Mammary epithelial cell (primary cell): ENCODE measurements at regions of chr11 and their contacts with region 1.

Region 1: DNA sequence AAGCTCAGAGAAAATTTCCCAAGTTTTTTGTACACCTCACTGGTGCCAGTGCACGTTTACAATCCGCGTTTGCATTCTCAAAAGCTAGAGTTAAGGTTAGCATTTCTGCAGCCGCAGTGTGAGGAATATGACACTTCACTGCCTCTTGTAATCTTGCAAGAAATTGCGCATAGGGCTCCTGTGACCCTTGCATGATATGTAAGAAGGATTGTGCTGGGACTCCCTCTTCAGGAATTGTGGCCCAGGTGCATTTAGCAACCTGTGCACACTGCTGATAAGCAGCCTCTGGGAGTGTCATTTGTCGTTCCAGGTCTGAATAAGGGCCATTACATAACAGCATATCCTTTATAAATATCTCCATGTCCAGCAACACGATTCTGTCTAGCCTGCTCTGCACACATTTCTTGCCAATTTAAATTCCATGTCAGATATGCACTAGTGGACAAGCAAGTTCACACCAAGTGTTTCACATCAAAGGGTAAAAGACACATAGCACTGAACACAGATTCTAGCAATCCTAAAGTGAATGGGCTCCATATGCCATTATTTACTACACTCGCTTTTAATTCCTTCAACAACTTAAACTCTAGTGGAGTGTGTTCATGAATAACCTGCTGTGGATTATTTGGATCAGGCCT is 69.2 kb upstream of the INCENP start:
- DNase-seq: peak; percentile 42
- H3K4me3 ChIP-seq: no peak overlapping the region
- H3K27ac ChIP-seq: no peak overlapping the region
- H3K4me1 ChIP-seq: peaks cover 8% of the 10 kb centered on the region
- H3K27me3 ChIP-seq: no peaks in the 10 kb centered on the region
- CTCF ChIP-seq: peak; percentile 74 to 87

Region 2: DNA sequence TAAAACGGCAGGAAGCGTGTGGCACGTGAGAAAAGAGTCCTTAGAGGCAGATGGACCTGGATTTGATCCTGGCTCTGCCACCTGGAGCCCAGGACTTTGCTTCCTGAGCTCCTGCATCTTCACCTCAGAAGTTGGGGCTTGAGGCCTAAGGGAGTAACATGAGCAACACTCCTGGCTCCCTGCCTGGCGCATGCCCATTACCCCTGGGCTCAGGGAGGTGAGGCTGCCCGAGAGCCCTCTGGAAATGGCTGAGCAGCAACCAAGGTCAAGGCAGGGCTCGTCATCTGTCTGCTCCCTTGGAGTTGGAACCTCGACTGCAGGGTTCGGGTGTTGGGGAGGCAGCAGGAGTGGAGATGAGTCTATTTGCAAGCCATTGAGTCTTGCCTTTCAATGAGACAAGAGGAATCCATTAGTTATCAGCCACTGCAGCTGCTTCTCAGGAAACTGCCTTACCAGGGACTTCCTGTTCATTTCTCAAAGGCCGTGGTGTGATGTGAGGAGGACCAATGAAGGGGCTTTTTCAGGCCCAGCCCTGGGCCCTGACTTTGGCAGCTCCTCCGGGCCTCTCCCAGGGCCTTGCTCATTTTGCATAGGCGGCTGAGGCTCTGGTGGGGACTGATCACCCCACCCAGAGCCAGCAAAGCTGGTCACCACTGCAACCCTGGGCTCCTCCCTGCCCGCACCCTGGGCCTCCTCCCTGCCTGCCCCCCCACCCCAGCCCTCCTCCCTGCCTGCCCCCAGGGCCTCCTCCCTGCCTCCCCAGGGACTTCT is 220.1 kb before region 1 on chr11:
- CTCF ChIA-PET with region 1: no interaction called
- dilution Hi-C with region 1: no loop called
- in situ Hi-C with region 1: no loop called
- intact Hi-C with region 1: no loop called
- DNase-seq: no peak
- H3K4me3 ChIP-seq: no peak overlapping the region
- H3K27ac ChIP-seq: no peak overlapping the region
- H3K4me1 ChIP-seq: peaks cover 5% of the 10 kb centered on the region
- H3K27me3 ChIP-seq: no peaks in the 10 kb centered on the region
- CTCF ChIP-seq: no peak

Region 3: GRCh38 chr11:61947486-61948210 is 107.0 kb before region 1 on chr11:
- CTCF ChIA-PET with region 1: no interaction called
- dilution Hi-C with region 1: no loop called
- in situ Hi-C with region 1: no loop called
- intact Hi-C with region 1: loop called (anchors 1 kb)
- DNase-seq: peak; percentile 59
- H3K4me3 ChIP-seq: no peak overlapping the region
- H3K27ac ChIP-seq: no peak overlapping the region
- H3K4me1 ChIP-seq: no peaks in the 10 kb centered on the region
- H3K27me3 ChIP-seq: no peaks in the 10 kb centered on the region
- CTCF ChIP-seq: peak; percentile 97 to 98

Region 4: DNA sequence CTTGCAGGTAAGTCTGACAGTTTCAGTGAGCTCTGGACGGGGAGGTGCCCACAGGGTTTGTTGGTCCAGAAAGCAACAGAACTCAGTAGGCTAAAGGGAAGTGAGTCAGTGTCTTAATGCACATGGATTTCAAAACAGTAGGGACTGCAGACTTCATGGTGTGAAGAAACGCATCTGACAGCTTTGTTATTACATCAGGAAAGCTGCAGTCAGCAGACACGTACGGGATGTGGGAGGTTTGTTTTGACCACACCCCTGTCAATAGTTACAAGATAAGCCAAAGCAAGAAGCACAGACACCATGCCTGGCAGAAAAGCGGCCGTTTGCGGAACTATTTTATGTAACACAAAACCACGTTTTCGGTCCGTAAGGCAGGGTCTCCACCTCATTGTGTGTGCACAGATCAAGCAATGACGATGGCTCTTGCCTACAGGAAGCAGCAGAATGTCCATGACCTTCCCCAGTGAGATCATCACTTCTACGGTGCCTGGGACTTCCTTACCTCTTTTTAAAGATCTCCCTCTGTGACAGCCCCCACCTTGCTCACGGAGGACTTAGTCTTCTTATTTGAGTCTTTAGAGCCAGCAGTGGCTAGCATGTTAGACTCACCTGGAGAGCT is 29.0 kb before region 1 on chr11:
- CTCF ChIA-PET with region 1: no interaction called
- dilution Hi-C with region 1: no loop called
- in situ Hi-C with region 1: no loop called
- intact Hi-C with region 1: no loop called
- DNase-seq: peak; percentile 98
- H3K4me3 ChIP-seq: no peak overlapping the region
- H3K27ac ChIP-seq: peak overlapping the region; percentile 87
- H3K4me1 ChIP-seq: peaks cover 14% of the 10 kb centered on the region
- H3K27me3 ChIP-seq: no peaks in the 10 kb centered on the region
- CTCF ChIP-seq: no peak